GM12878 (cell line): ENCODE measurements at regions of chr1 and their contacts with region 1.

Region 1: DNA sequence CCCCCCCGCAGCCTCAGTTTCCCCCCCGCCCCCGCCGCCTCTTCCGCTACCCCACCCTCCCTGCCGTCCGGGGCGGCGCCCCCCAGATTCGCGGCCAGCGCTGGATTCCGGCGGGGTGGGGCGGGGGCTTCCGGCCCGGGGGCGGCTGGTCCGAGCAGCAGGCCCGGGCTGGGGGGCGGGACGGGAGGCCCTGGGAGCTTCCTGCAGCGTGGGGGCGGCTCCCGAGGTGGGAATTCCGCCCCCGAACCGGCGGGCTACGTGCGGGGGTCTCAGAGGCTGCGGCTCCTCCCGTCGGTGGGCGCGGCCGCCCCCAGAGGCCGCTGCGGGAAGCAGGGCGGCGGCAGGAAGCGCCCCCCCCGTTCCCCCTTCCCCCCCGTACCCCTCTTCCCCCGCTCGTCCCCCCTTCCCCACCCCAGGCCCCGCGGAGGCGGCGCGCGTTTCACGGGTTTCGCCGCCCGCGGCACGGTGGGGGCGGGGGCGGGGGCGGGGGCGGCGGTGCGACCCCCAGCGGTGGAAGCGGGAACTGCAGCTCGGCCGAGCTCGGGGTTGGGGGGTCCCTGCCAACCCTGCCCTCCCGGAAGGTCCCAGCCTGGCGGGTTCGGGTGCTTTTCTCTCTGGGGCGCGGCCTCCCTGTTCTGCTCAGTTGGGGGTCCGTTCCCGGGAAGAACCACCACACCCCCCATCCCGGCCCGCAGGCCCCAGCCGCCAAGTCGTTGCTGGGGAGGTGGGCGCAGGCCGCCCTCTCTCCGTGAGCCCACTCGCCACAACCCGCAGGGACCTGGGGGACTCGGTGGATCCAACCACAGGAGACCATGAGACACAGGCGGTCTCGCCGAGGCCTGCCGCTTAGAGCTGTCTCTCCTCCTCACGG is 76.3 kb downstream of the MORN1 start:
- DNase-seq: no peak
- ATAC-seq: peak; percentile 68
- H3K4me3 ChIP-seq: peak overlapping the region; percentile 41; the same call in 1 of the 2 replicates
- H3K27ac ChIP-seq: no peak overlapping the region
- H3K4me1 ChIP-seq: peaks cover 10% of the 10 kb centered on the region
- H3K27me3 ChIP-seq: no peaks in the 10 kb centered on the region
- CTCF ChIP-seq: peak; percentile 54 to 71 (median 56)
- EP300 ChIP-seq: no peak
- POLR2A ChIP-seq: no peak
- RAD21 ChIP-seq: 0 out of 2 replicates have a peak, but pooled peaks have one; percentile 6

Region 2: GRCh38 chr1:2227346-2228153 is 87.5 kb before region 1 on chr1:
- CTCF ChIA-PET with region 1: interaction called, 3 read pairs
- POLR2A ChIA-PET with region 1: no interaction called
- RAD21 ChIA-PET with region 1: interaction called, 5 read pairs
- SMC1A ChIA-PET with region 1: no interaction called
- in situ Hi-C with region 1: no loop called
- intact Hi-C with region 1: loop called (anchors 5 kb)
- DNase-seq: peak; percentile 41
- ATAC-seq: peak; percentile 95
- H3K4me3 ChIP-seq: peak overlapping the region; percentile 65; the same call in 1 of the 2 replicates
- H3K27ac ChIP-seq: peak overlapping the region; percentile 30; the same call in 1 of the 2 replicates
- H3K4me1 ChIP-seq: peaks cover 14% of the 10 kb centered on the region
- H3K27me3 ChIP-seq: no peaks in the 10 kb centered on the region
- CTCF ChIP-seq: peak in 1 of 3 experiments; percentile 16; a peak in 1 of 6 replicates
- EP300 ChIP-seq: no peak
- POLR2A ChIP-seq: peak; percentile 85
- RAD21 ChIP-seq: no peak

Region 3: DNA sequence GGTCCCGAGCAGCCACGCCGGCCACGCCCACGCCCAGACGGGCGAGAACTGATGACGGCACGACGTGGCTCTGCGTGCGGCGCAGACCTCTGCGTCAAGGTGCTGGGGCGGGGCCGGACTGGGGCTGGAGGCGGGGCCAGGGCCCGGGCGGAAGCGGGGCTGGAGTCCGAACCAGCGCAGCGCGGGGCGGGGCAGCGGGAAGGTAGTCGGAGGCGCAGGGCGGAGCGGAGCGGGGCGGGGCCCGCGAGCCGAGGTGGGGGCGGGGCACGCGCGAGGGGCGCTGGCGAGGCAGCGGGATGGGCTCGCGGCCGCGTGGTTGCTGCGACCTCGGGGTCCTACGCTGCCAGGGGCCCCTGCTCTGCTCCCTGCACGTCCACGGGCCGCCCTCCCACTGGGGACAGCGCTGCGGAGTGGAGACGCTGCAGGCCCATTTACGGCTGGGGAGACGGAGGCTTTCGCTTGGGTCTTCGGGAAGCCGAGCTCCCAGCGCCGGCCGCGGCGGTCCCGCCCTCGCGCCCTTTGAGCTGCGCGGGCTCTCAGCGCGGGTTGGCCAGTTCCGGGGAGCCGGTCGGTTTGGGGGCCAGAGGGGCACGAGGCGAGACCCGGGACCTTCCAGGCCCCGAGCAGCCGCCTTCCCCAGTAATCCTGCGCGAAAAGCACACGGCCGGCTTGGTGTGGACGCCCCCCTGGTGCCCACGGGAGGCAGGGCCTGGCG is 97.6 kb after region 1 on chr1 and contains the start of gene PEX10:
- CTCF ChIA-PET with region 1: no interaction called
- POLR2A ChIA-PET with region 1: no interaction called
- RAD21 ChIA-PET with region 1: no interaction called
- SMC1A ChIA-PET with region 1: no interaction called
- in situ Hi-C with region 1: no loop called
- intact Hi-C with region 1: no loop called
- DNase-seq: peak; percentile 80
- ATAC-seq: peak; percentile 88
- H3K4me3 ChIP-seq: peak within 1 kb of the TSS; percentile 98
- H3K27ac ChIP-seq: peak within 1 kb of the TSS; percentile 62
- H3K4me1 ChIP-seq: peaks cover 27% of the 10 kb centered on the region
- H3K27me3 ChIP-seq: no peaks in the 10 kb centered on the region
- CTCF ChIP-seq: no peak
- EP300 ChIP-seq: no peak
- POLR2A ChIP-seq: peak; percentile 87
- RAD21 ChIP-seq: no peak
- polyA plus RNA-seq, gene PEX10: 0.24 TPM in 1 of 2 experiments, not detected in the other